Panc1 (cell line): ENCODE measurements at regions of chr5 and their contacts with region 1.

Region 1: GRCh38 chr5:7391814-7392692 is 3.9 kb upstream of the ADCY2 start:
- DNase-seq: no peak
- ATAC-seq: 0 out of 2 replicates have a peak, but pooled peaks have one; percentile 47
- H3K4me3 ChIP-seq: no peak overlapping the region
- H3K27ac ChIP-seq: no peak overlapping the region
- H3K4me1 ChIP-seq: peaks cover 4% of the 10 kb centered on the region; the same call in 1 of the 2 replicates
- H3K27me3 ChIP-seq: peaks cover 10% of the 10 kb centered on the region
- CTCF ChIP-seq: peak; percentile 82

Region 2: GRCh38 chr5:6765612-6766525 is 626.2 kb before region 1 on chr5:
- CTCF ChIA-PET with region 1: no interaction called
- POLR2A ChIA-PET with region 1: no interaction called
- in situ Hi-C with region 1: no loop called
- intact Hi-C with region 1: loop called (anchors 5 kb)
- DNase-seq: peak; percentile 57
- ATAC-seq: peak; percentile 80
- H3K4me3 ChIP-seq: peak overlapping the region; percentile 1 to 44; a peak in 2 of 4 replicates
- H3K27ac ChIP-seq: peak overlapping the region; percentile 85
- H3K4me1 ChIP-seq: peaks cover 27% of the 10 kb centered on the region
- H3K27me3 ChIP-seq: no peaks in the 10 kb centered on the region
- CTCF ChIP-seq: peak; percentile 94

Region 3: GRCh38 chr5:7261049-7261448 is 131.0 kb before region 1 on chr5:
- CTCF ChIA-PET with region 1: no interaction called
- POLR2A ChIA-PET with region 1: no interaction called
- in situ Hi-C with region 1: no loop called
- intact Hi-C with region 1: loop called (anchors 2 kb)
- DNase-seq: peak; percentile 15
- ATAC-seq: 0 out of 2 replicates have a peak, but pooled peaks have one; percentile 73
- H3K4me3 ChIP-seq: no peak overlapping the region
- H3K27ac ChIP-seq: no peak overlapping the region
- H3K4me1 ChIP-seq: no peaks in the 10 kb centered on the region
- H3K27me3 ChIP-seq: no peaks in the 10 kb centered on the region
- CTCF ChIP-seq: peak; percentile 66

Region 4: DNA sequence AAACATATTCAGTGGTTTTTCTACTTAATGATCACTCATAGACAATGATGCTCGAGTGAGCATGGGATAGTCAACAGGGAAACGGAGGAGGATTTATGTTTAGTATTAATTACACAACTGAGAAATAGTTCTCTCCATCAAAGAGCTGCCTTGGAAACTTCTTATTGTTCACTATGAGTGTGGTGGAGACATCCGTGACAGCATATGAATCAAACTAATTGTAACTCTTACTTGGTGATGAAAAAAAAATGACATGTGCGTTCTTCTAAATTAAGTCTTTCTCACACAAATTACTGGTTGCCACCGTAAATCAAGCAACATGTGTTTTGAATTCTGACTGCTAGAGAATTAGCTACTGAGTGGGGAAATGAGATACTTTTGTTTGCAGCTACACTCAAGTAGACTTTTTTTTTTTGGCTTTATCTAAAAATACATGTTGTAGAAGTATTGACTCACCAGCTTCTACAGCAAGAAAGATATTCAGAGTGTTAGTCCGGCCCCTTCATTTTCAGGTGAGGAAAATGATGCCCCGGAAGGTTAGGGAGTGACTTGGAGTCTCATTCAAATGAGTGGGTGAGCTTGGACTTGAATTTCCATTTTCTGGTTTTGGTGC is 279.4 kb after region 1 on chr5:
- CTCF ChIA-PET with region 1: no interaction called
- POLR2A ChIA-PET with region 1: no interaction called
- in situ Hi-C with region 1: no loop called
- intact Hi-C with region 1: no loop called
- DNase-seq: no peak
- ATAC-seq: no peak
- H3K4me3 ChIP-seq: no peak overlapping the region
- H3K27ac ChIP-seq: no peak overlapping the region
- H3K4me1 ChIP-seq: no peaks in the 10 kb centered on the region
- H3K27me3 ChIP-seq: no peaks in the 10 kb centered on the region
- CTCF ChIP-seq: no peak

Region 5: DNA sequence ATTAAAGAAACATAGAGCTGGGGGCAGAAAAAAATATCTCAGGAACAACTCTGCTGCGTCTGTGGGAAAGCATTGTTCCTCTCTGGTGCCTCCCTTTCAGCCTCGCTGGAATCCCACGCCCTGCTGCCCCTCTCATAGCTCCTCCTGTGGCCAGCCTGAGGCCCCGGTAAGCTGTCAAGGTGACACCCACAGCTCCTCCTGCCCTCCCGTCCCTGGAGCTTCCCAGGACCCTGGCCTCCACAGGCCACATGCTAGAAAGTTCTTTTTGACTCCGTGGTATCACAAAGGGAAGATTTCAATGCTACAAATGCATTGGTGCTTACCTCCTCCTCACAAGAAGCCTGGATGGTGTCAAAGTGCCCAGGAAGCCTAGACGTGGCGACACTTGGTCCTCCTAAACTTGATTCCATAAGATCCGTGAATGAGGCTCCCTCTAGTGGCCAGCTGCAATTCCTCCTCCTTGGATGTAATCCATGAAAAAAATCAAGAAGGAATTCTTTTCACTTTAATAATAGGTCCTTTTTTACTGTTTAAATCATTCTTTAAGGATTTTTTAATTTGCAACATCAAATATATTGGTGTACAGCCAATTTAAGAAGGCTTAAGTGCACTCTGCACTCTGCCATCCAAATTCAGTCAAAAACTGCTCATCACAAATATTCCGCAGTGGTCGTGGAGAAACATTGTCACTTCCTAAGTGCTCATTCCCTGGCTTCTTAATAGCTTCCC is 354.0 kb after region 1 on chr5:
- CTCF ChIA-PET with region 1: no interaction called
- POLR2A ChIA-PET with region 1: no interaction called
- in situ Hi-C with region 1: no loop called
- intact Hi-C with region 1: loop called (anchors 10 kb)
- DNase-seq: peak; percentile 35
- ATAC-seq: peak; percentile 85; the same call in 1 of the 2 replicates
- H3K4me3 ChIP-seq: no peak overlapping the region
- H3K27ac ChIP-seq: no peak overlapping the region
- H3K4me1 ChIP-seq: no peaks in the 10 kb centered on the region
- H3K27me3 ChIP-seq: no peaks in the 10 kb centered on the region; the same call in 1 of the 2 replicates
- CTCF ChIP-seq: peak; percentile 93